Activated B cell treated with CpG ODN at 0.5 μM for 24 hours (primary cell): ENCODE measurements at regions of chr14 and their contacts with region 1.

Region 1: DNA sequence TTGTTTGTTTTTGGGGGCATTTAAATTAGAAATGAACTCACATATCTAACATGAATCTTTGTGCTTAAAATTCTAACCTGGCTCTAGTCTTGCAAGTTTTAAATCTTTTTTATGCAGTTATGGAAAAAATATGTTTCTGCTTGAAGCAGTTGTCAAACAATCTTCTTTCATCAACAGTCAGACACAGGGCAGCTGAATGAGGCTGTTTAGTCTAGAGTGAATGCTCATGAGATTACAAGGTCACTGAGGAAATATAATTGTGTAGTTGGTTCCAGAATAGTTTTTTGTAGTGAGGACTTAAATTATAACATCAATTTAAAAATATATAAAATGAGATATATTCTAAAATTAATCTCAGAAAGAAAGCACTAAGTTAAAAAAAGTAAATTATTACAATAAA is 76.5 kb downstream of the TRMT5 start:
- DNase-seq: no peak
- ATAC-seq: no peak
- H3K4me3 Mint-ChIP-seq: no peak overlapping the region
- H3K27ac Mint-ChIP-seq: no peak overlapping the region
- H3K4me1 Mint-ChIP-seq: peaks cover 7% of the 10 kb centered on the region
- H3K27me3 Mint-ChIP-seq: no peaks in the 10 kb centered on the region
- CTCF ChIP-seq: no peak

Region 2: GRCh38 chr14:60845523-60845922 is 58.9 kb before region 1 on chr14:
- CTCF ChIA-PET with region 1: no interaction called
- POLR2A ChIA-PET with region 1: no interaction called
- intact Hi-C with region 1: loop called (anchors 1 kb)
- DNase-seq: no peak
- ATAC-seq: peak; percentile 83
- H3K4me3 Mint-ChIP-seq: peak overlapping the region; percentile 64
- H3K27ac Mint-ChIP-seq: peak overlapping the region; percentile 92
- H3K4me1 Mint-ChIP-seq: peaks cover 23% of the 10 kb centered on the region
- H3K27me3 Mint-ChIP-seq: no peaks in the 10 kb centered on the region
- CTCF ChIP-seq: no peak

Region 3: GRCh38 chr14:61368114-61368726 is 463.8 kb after region 1 on chr14:
- CTCF ChIA-PET with region 1: no interaction called
- POLR2A ChIA-PET with region 1: no interaction called
- intact Hi-C with region 1: no loop called
- DNase-seq: no peak
- ATAC-seq: no peak
- H3K4me3 Mint-ChIP-seq: no peak overlapping the region
- H3K27ac Mint-ChIP-seq: no peak overlapping the region
- H3K4me1 Mint-ChIP-seq: no peaks in the 10 kb centered on the region
- H3K27me3 Mint-ChIP-seq: peaks cover 3% of the 10 kb centered on the region
- CTCF ChIP-seq: no peak